Activated naive CD4-positive, alpha-beta T cell treated with anti-CD3 and anti-CD28 coated beads, Interleukin-2, amount 10 ng/mL, durations not matched to agents 7 days and 5 days (primary cell): ENCODE measurements at regions of chr3 and their contacts with region 1.

Region 1: DNA sequence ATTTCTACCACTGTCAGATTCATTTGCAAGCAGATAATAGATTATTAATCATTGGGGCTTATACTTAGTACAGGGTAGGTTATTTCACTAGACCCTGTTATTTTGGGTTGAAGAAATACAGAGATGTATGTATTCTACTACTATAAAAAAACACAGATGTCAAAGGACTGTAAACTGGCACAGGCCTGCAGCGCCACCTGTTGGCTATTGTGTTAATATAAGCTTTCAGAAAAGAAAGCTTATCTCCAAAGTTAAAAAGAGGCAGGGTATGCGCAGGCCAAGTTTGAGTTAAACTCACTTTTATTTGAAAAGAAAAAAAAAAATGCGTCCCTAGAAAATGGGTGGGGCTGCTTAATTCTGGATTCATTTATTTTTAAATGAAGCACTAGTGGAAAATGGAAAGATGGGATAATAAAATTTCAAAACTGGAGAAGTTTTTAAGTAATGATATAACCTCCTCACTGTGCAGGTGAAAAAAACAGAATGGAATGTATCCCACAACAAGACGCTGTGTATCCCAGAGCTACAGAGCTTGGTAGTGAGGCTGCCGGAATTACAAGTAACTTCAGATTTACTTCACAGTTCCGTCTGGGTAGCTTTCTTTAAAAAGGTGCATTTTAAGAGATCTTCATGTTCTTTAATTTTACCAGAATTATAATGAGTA is 407.2 kb upstream of the TGFBR2 start:
- DNase-seq: peak; percentile 80
- H3K4me3 Mint-ChIP-seq: no peak overlapping the region
- H3K27ac Mint-ChIP-seq: no peak overlapping the region
- H3K4me1 Mint-ChIP-seq: peaks cover 2% of the 10 kb centered on the region
- H3K27me3 Mint-ChIP-seq: no peaks in the 10 kb centered on the region

Region 2: DNA sequence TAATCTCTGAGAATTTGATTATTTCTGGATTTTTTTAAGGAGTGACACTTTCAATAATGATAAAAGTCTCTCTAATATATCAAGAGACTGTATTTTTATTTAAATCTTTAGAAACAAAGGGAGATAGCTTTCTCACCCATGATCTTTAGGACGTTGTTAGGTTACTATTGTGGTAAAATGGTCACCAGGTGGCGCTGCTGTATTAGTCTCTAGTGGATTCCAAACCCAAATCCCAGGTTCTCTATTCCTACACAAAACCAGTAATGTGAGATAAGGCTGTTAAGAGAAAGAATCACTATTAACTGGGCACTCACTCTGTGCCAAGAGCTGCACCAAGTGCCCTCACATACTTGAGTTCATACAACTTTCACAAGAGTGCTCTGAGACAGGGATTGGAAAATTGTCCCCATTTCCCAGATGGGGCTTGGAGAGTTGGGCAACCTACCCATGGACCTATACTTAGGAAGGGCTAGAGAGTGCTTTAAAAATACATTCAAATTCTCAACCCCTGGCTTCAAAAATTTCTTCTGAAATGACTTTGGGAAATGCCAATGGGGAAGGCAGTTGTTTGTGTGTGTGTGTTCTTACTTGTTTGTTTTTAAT is 186.2 kb before region 1 on chr3:
- CTCF ChIA-PET with region 1: interaction called, 16 read pairs
- DNase-seq: peak; percentile 67
- H3K4me3 Mint-ChIP-seq: no peak overlapping the region
- H3K27ac Mint-ChIP-seq: no peak overlapping the region
- H3K4me1 Mint-ChIP-seq: no peaks in the 10 kb centered on the region
- H3K27me3 Mint-ChIP-seq: peaks cover 7% of the 10 kb centered on the region

Region 3: GRCh38 chr3:30042274-30042859 is 156.9 kb before region 1 on chr3:
- CTCF ChIA-PET with region 1: interaction called, 59 read pairs
- DNase-seq: peak; percentile 76
- H3K4me3 Mint-ChIP-seq: no peak overlapping the region
- H3K27ac Mint-ChIP-seq: no peak overlapping the region
- H3K4me1 Mint-ChIP-seq: peaks cover 4% of the 10 kb centered on the region
- H3K27me3 Mint-ChIP-seq: peaks cover 18% of the 10 kb centered on the region

Region 4: GRCh38 chr3:30112902-30113484 is 86.2 kb before region 1 on chr3:
- CTCF ChIA-PET with region 1: interaction called, 23 read pairs
- DNase-seq: no peak
- H3K4me3 Mint-ChIP-seq: no peak overlapping the region
- H3K27ac Mint-ChIP-seq: no peak overlapping the region
- H3K4me1 Mint-ChIP-seq: peaks cover 7% of the 10 kb centered on the region
- H3K27me3 Mint-ChIP-seq: peaks cover 5% of the 10 kb centered on the region

Region 5: GRCh38 chr3:30188713-30189112 is 10.5 kb before region 1 on chr3:
- CTCF ChIA-PET with region 1: interaction called, 25 read pairs
- DNase-seq: no peak
- H3K4me3 Mint-ChIP-seq: no peak overlapping the region
- H3K27ac Mint-ChIP-seq: no peak overlapping the region
- H3K4me1 Mint-ChIP-seq: no peaks in the 10 kb centered on the region
- H3K27me3 Mint-ChIP-seq: peaks cover 3% of the 10 kb centered on the region

Region 6: DNA sequence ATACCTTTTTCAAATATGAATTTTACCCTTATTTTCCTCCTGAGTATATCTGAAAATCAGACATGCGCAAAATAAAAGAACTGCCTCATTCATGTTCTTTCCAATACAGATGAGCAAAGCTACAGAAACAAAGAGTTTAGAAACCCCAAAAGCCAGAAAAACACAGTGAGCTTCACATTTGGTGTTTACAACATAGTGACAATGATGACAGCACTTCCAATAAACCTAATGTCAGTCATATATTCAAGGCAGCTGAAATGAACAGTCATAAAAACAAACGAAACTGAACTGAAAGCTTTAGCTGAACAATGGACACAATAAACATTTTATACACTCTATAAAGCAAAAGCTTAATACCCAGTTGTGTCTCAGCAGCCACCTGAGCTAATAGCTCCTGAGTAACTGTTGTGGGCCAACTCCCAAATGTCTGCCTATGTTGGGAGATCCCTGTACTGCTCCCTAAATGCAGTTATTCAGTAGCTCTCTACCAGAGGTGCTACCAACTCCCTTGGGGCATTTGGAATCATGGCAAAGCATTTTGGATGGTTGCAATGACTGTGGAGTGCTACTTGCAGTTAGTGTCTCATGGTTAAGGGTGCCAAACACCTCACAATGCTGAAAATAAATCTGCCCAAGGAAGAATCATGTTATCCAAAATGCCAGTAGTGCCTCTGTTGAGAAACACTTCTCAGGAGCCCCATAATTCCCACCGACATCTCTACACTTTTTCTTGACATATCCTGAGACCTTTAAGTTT is 538.7 kb after region 1 on chr3:
- CTCF ChIA-PET with region 1: no interaction called
- DNase-seq: no peak
- H3K4me3 Mint-ChIP-seq: no peak overlapping the region
- H3K27ac Mint-ChIP-seq: no peak overlapping the region
- H3K4me1 Mint-ChIP-seq: peaks cover 11% of the 10 kb centered on the region
- H3K27me3 Mint-ChIP-seq: no peaks in the 10 kb centered on the region